Activated CD4-positive, alpha-beta memory T cell treated with anti-CD3 and anti-CD28 coated beads, Interleukin-2, amount 10 ng/mL, durations not matched to agents 7 days and 5 days (primary cell): ENCODE measurements at regions of chr2 and their contacts with region 1.

Region 1: DNA sequence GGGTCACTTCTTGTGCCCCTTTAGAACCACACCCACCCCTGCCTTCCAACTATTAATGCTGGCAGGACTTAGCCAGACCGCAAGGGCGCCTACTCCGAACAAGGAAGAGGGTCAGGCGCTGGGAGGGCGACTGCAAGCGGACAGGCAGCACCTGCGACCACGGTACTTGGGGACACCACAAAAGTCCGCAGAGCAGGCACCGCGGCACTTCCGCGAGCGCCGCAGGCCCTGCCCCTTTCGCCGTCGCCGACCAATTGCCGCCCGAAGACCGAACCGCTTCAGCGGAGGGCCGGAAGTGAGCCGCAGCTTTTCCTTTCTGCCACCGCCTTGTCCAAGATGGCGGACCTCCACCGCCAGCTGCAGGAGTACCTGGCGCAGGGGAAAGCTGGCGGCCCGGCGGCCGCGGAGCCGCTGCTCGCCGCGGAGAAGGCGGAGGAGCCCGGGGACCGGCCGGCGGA is at the start of gene SFT2D3:
- DNase-seq: peak; percentile 93
- H3K4me3 Mint-ChIP-seq: peak within 1 kb of the TSS; percentile 88
- H3K27ac Mint-ChIP-seq: peak within 1 kb of the TSS; percentile 95
- H3K4me1 Mint-ChIP-seq: peaks cover 39% of the 10 kb centered on the region
- H3K27me3 Mint-ChIP-seq: no peaks in the 10 kb centered on the region
- total RNA-seq, gene SFT2D3: 5.2 to 5.8 TPM

Region 2: DNA sequence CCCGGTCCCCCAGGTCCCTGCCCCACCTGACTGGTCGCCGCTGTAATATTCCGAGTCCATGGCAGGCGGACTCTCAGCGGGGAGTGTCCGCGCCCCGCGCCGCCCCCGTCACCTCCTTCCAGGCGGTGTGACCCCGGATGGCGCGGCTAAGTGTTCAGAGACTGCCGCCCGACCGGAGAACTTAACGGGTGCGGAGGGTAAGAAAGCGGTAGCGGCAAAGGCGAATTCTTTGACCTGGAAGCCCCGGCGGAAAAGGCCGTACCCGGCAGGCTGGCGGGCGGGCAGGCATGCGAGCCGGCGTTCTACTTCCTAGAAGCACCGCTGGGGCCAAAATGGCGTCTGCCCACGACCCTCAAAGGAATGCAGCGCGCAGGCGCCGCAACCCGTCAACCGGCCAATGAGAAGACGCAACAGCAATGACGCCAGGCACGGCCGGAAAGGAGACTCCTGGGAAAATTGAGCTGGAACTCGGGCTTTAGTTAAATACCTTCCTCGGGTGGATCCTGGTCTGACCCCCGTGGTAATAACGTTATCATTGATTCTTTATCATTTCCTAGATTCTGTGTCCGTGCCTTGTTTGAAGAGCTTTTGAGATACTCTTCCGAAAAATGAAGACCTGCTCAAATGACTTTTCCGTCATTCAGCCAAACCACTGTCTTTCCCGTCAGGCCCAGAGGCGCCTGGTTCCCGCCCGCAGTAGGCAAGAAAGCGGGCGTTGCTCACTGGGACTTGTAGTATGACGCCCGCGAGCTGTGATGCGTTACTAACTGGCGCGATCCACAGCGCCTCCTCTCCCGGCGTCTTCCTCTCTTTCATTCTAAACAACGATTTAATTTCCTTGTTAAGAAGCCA is 174.8 kb before region 1 on chr2 and contains the start of gene IWS1:
- CTCF ChIA-PET with region 1: no interaction called
- POLR2A ChIA-PET with region 1: interaction called, 29 read pairs
- DNase-seq: peak; percentile 95
- H3K4me3 Mint-ChIP-seq: peak within 1 kb of the TSS; percentile 86
- H3K27ac Mint-ChIP-seq: peak within 1 kb of the TSS; percentile 92
- H3K4me1 Mint-ChIP-seq: peaks cover 33% of the 10 kb centered on the region
- H3K27me3 Mint-ChIP-seq: peaks cover 7% of the 10 kb centered on the region
- total RNA-seq, gene IWS1: 40.8 to 43.3 TPM

Region 3: DNA sequence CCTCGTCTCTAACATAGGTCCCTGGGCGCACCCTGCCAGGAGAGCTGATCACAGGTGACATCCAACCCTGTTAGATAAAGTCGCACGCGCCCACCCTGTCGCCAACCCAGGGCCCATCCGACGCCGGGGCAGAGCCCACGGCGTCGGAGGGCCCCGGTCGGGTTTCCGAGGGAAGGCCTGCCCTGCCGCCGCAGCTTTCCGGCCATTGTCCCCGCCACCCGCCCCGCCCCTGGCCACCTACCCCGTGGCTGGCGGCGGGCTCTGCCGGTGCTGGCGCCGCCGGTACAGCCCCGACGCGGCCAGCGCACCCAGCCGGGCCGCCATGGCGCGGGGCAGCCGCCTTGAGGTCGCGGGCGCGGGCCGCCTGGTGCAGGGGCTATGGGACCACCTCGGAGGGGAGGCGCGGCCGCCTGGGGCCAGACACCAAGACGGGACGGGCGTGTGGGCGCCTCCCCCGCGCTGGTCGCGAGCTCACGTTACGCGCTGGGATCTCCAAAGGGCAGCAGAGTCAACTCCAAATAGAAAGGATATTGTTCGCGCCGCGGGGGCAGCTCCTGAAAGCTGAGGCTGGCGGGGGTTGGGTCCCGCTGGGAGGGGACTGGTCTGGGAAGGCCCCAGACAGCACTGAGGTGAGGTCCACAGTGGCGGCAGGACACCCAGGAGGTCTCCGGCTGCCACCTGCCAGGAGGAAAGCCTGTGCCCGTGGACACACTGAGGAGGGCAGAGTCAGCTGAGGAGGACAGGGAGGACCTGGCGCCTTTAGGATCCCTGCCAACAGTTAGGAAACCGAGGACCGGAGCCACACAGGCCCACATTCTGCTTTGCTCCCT is 36.9 kb before region 1 on chr2:
- CTCF ChIA-PET with region 1: no interaction called
- POLR2A ChIA-PET with region 1: no interaction called
- DNase-seq: no peak
- H3K4me3 Mint-ChIP-seq: no peak overlapping the region
- H3K27ac Mint-ChIP-seq: no peak overlapping the region
- H3K4me1 Mint-ChIP-seq: no peaks in the 10 kb centered on the region
- H3K27me3 Mint-ChIP-seq: peaks cover 47% of the 10 kb centered on the region

Region 4: GRCh38 chr2:127712999-127713398 is 11.8 kb after region 1 on chr2:
- CTCF ChIA-PET with region 1: interaction called, 3 read pairs
- POLR2A ChIA-PET with region 1: interaction called, 28 read pairs
- DNase-seq: no peak
- H3K4me3 Mint-ChIP-seq: no peak overlapping the region
- H3K27ac Mint-ChIP-seq: no peak overlapping the region
- H3K4me1 Mint-ChIP-seq: no peaks in the 10 kb centered on the region
- H3K27me3 Mint-ChIP-seq: no peaks in the 10 kb centered on the region

Region 5: DNA sequence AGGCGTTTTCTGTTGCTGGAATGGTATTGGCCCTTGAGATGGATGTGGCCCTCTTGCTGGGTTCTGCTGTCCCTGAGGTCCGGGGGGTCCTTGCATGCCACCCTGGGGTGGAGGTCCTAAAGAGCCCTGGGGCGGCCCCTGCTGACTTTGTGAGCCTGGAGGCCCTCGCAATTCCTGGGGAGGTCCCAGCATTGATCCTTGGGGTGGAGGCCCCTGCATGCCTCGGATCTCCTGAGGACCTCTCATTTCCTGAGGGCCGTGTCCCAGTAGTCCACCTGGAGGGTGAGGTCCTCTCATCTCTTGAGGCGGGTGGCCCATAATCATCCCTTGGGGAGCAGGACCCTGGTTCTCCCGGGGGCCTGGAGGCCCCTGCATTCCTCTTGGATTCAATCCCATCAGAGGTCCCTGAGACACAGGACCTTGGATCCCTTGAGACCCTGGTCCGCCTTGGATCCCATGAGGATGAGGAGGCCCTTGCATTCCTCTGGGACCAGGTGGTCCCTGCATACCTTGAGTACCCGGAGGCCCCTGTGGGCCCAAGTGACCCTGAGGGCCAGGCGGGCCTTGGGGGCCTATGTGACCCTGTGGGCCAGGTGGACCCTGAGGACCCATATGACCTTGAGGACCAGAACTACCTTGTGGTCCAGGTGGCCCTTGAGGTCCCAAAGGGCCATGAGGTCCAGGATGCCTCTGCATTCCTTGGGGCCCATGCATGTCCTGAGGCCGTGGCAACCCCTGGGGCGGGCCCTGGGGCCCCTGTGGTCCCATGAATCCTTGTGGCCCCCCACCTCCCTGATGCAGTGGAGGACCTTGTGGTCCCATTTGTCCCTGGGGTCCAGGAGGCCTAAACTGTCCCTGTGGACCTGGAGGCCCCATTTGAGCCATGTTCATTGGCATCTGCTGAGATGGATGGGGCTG is 18.3 kb after region 1 on chr2:
- CTCF ChIA-PET with region 1: interaction called, 3 read pairs
- POLR2A ChIA-PET with region 1: interaction called, 28 read pairs
- DNase-seq: no peak
- H3K4me3 Mint-ChIP-seq: no peak overlapping the region
- H3K27ac Mint-ChIP-seq: no peak overlapping the region
- H3K4me1 Mint-ChIP-seq: no peaks in the 10 kb centered on the region
- H3K27me3 Mint-ChIP-seq: no peaks in the 10 kb centered on the region

Region 6: DNA sequence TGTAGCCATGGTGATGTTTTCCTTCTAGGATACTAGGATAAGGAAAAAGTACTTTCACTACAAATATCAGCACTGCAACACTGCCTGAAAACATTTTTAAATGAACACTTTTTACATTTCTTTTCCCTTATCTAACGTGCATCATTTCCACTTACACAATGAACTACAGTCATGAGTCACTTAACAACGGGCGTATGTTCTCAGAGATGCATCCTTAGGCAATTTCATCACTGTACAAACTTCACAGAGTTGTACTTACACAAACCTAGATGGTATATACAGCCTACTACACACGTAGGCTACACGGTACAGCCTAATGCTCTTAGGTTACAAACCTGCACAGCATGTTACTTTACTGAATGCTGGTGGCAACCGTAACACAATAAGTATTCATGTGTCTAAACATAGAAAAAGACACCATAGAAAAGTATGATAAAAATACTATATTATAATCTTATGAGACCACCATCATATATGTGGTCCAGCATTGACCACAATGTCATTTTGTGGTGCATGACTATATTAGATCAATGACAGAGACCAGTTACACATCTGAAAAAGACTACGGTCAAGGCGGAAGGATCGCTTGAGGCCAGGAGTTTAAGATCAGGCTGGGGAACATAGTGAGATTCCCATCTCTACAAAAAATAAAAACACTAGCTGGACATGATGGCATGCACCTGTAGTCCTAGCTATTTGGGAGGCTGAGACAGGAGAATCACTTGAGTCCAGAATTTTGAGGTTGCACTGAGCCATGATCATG is 69.9 kb after region 1 on chr2:
- CTCF ChIA-PET with region 1: no interaction called
- POLR2A ChIA-PET with region 1: no interaction called
- DNase-seq: no peak
- H3K4me3 Mint-ChIP-seq: no peak overlapping the region
- H3K27ac Mint-ChIP-seq: no peak overlapping the region
- H3K4me1 Mint-ChIP-seq: peaks cover 11% of the 10 kb centered on the region
- H3K27me3 Mint-ChIP-seq: no peaks in the 10 kb centered on the region

Region 7: GRCh38 chr2:127810619-127811396 is 109.6 kb after region 1 on chr2 and contains the start of gene WDR33:
- CTCF ChIA-PET with region 1: interaction called, 5 read pairs
- POLR2A ChIA-PET with region 1: interaction called, 18 read pairs
- DNase-seq: peak; percentile 95
- H3K4me3 Mint-ChIP-seq: peak within 1 kb of the TSS; percentile 100
- H3K27ac Mint-ChIP-seq: peak within 1 kb of the TSS; percentile 96
- H3K4me1 Mint-ChIP-seq: peaks cover 49% of the 10 kb centered on the region
- H3K27me3 Mint-ChIP-seq: peaks cover 4% of the 10 kb centered on the region
- total RNA-seq, gene WDR33: 63.7 to 65.1 TPM

Region 8: GRCh38 chr2:127857265-127857808 is 156.1 kb after region 1 on chr2:
- CTCF ChIA-PET with region 1: interaction called, 6 read pairs
- POLR2A ChIA-PET with region 1: interaction called, 18 read pairs
- DNase-seq: peak; percentile 24
- H3K4me3 Mint-ChIP-seq: peak overlapping the region; percentile 90
- H3K27ac Mint-ChIP-seq: peak overlapping the region; percentile 73
- H3K4me1 Mint-ChIP-seq: peaks cover 50% of the 10 kb centered on the region
- H3K27me3 Mint-ChIP-seq: no peaks in the 10 kb centered on the region

Region 9: DNA sequence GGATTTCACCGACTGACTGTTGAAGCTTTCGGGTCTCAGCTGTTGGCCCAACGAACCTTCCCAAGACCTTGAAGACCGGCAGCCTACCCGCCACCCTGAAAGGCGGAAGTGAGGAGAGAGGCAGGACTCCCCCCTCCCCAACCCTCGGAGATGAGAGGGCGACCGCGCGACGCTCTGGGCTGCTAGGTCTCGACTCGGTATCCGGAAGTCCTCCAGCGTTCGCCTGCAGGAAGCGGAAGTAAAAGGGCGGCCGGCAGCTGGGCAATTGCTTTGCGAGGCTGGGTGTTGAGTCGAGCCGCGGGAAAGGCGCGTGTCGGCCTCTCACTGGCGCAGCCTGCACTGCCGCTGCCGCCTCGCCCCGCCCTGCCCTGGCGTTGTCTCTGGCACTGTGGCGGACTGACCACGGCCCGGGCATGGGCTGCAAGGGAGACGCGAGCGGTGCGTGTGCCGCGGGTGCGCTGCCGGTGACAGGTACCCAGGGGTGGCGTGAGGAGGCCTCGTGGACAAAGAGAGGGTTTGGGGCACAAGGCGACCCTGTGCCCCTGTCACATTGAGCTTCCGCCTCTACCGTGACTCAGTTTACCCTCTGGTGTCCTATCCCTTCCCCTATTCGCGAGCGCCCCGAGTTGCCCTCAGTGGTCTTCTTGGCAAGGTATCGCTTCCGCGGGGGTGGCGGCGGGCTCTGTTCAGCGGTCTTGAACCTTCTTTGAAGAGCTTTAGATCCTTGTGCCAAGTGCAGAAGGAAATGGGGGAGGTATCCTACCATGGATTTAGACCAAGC is 389.9 kb after region 1 on chr2 and contains the start of gene UGGT1:
- CTCF ChIA-PET with region 1: no interaction called
- POLR2A ChIA-PET with region 1: interaction called, 30 read pairs
- DNase-seq: peak; percentile 96
- H3K4me3 Mint-ChIP-seq: peak within 1 kb of the TSS; percentile 79
- H3K27ac Mint-ChIP-seq: peak within 1 kb of the TSS; percentile 79
- H3K4me1 Mint-ChIP-seq: peaks cover 56% of the 10 kb centered on the region
- H3K27me3 Mint-ChIP-seq: no peaks in the 10 kb centered on the region
- total RNA-seq, gene UGGT1: 56.2 to 61.0 TPM